CD8-positive, alpha-beta memory T cell (primary cell): ENCODE measurements at regions of chr16 and their contacts with region 1.

Region 1: GRCh38 chr16:56964243-56965148 is 2.7 kb downstream of the CETP start:
- DNase-seq: peak; percentile 87 to 96 (median 95)
- H3K4me3 ChIP-seq: no peak overlapping the region
- H3K4me3 Mint-ChIP-seq: peak overlapping the region in 1 of 7 donors; percentile 11
- H3K27ac ChIP-seq: no peak overlapping the region
- H3K27ac Mint-ChIP-seq: peak overlapping the region in 4 of 8 donors; percentile 31 to 87 (median 82)
- H3K4me1 ChIP-seq: peaks cover 21% of the 10 kb centered on the region
- H3K4me1 Mint-ChIP-seq: peaks cover 18 to 31% (median 21%) of the 10 kb centered on the region in 3 donors
- H3K27me3 ChIP-seq: no peaks in the 10 kb centered on the region
- H3K27me3 Mint-ChIP-seq: peaks cover 0 to 1% of the 10 kb centered on the region in 2 donors

Region 2: DNA sequence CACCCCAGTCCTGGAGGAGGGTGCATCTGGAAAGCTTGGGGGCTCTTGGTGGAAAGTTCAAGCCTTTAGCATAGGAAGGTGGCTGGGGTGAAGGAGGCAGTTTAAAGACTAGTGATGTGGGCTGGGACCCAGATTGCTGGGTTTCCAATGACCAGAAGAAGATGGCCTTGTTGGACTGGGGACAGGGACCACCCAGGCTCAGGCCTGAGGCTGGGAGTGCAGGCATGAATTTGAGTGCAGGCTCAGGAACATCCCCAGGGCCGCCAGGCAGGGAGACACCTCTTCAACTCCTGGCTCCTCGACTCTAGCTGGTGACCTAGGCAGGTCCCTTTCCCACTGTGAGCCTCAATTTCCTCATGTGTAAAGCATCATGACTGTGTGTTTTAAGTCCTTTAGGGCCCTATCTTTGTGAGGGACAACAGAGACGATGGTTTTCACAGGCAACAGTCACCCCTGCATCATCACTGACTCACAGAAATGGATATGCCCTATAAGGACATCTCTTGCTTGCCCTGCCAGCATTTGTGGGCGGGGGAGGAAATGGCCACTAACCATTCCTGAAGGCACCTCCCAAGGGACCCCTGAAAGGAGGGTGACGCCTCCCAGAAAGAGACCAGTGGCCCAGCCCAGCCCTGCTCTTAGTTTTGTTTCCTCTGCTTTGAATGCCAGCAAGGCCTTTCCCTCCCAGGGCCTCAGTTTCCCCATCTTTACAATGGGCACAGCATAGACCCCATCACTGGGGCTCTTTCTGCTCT is 36.0 kb after region 1 on chr16:
- CTCF ChIA-PET with region 1: interaction called, 17 read pairs
- POLR2A ChIA-PET with region 1: no interaction called
- DNase-seq: peak in 3 of 5 donors; percentile 39 to 74 (median 39)
- H3K4me3 ChIP-seq: peak overlapping the region; percentile 52
- H3K4me3 Mint-ChIP-seq: peak overlapping the region; percentile 74 to 87 (median 79)
- H3K27ac ChIP-seq: peak overlapping the region; percentile 71
- H3K27ac Mint-ChIP-seq: peak overlapping the region; percentile 90 to 99 (median 96)
- H3K4me1 ChIP-seq: peaks cover 94% of the 10 kb centered on the region
- H3K4me1 Mint-ChIP-seq: peaks cover 97 to 100% (median 99%) of the 10 kb centered on the region in 3 donors
- H3K27me3 ChIP-seq: no peaks in the 10 kb centered on the region
- H3K27me3 Mint-ChIP-seq: no peaks in the 10 kb centered on the region

Region 3: DNA sequence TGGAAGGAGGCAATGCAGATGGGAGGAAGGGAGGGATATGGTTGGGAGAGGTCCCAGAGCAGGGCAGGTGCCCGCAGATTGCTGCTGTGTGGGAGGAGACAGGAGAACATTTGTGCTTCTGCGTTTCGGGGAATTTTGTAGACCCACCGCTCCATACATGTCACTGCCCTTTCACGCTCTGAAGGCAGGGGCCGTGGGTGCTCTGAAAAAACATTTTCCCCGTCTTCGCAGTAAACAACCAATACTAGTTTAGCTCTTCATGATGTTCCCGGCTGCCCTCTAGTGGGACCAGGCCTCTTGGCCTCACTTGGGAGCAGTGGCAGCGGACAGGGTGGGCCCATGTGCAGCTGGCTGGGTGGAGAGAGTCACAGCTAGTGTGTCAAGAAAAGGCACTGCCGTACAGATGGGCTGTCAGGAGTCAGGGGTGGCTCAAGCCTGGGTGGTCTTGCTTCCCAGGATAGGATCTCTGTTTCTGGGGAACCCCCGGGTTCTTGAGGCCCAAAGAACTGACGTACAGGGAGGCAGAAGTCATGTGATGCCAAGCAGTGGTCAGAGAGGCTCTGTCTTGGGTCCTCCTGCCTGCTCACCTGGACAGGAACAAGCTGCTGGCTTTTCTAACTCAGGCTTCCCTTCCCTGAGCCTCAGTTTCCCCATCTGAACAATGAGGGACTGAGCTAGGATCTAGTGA is 81.3 kb after region 1 on chr16:
- CTCF ChIA-PET with region 1: interaction called, 91 read pairs
- POLR2A ChIA-PET with region 1: interaction called, 5 read pairs
- DNase-seq: peak in 3 of 5 donors; percentile 38 to 76 (median 48)
- H3K4me3 ChIP-seq: no peak overlapping the region
- H3K4me3 Mint-ChIP-seq: peak overlapping the region in 4 of 7 donors; percentile 15 to 54 (median 16)
- H3K27ac ChIP-seq: no peak overlapping the region
- H3K27ac Mint-ChIP-seq: peak overlapping the region; percentile 85 to 96 (median 90)
- H3K4me1 ChIP-seq: peaks cover 49% of the 10 kb centered on the region
- H3K4me1 Mint-ChIP-seq: peaks cover 41 to 67% (median 44%) of the 10 kb centered on the region in 3 donors
- H3K27me3 ChIP-seq: no peaks in the 10 kb centered on the region
- H3K27me3 Mint-ChIP-seq: peaks cover 0 to 1% of the 10 kb centered on the region in 2 donors

Region 4: DNA sequence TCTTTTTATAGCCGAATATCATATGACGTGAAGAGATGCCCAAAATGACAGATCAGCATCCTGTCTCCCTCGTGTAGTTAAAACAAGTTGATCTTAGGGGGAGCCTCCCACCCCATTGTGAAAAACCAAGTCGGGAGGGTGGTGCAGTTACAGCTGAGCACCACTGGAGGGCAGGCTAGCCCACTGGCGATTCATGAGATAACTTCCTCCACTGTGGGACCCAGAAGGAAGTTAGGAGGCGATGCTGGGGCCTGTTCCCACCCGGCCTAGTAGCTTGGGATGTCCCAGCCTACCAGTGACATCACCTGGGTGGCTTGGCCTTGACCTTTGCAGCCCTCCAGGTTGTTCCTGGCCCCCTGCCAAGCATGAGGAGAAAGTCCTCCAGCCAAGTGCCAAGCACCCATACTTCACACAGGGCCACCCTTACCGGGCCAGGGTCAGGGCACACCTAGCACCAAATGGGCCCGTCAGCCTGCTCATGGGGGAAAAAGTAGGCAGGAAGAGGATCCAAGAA is 119.8 kb after region 1 on chr16:
- CTCF ChIA-PET with region 1: interaction called, 17 read pairs
- POLR2A ChIA-PET with region 1: no interaction called
- DNase-seq: peak; percentile 63 to 85 (median 78)
- H3K4me3 ChIP-seq: no peak overlapping the region
- H3K4me3 Mint-ChIP-seq: peak overlapping the region in 2 of 7 donors; percentile 17 to 76
- H3K27ac ChIP-seq: peak overlapping the region; percentile 21
- H3K27ac Mint-ChIP-seq: peak overlapping the region; percentile 29 to 96 (median 85)
- H3K4me1 ChIP-seq: peaks cover 12% of the 10 kb centered on the region
- H3K4me1 Mint-ChIP-seq: peaks cover 12 to 16% (median 14%) of the 10 kb centered on the region in 3 donors
- H3K27me3 ChIP-seq: no peaks in the 10 kb centered on the region
- H3K27me3 Mint-ChIP-seq: no peaks in the 10 kb centered on the region

Region 5: GRCh38 chr16:57284208-57284951 is 319.9 kb after region 1 on chr16 and contains the start of gene PLLP:
- CTCF ChIA-PET with region 1: no interaction called
- POLR2A ChIA-PET with region 1: no interaction called
- DNase-seq: peak in 4 of 5 donors; percentile 13 to 59 (median 32)
- H3K4me3 ChIP-seq: peak within 1 kb of the TSS; percentile 53
- H3K4me3 Mint-ChIP-seq: peak within 1 kb of the TSS; percentile 58 to 89 (median 71)
- H3K27ac ChIP-seq: peak within 1 kb of the TSS; percentile 4
- H3K27ac Mint-ChIP-seq: peak within 1 kb of the TSS in 1 of 8 donors; percentile 21
- H3K4me1 ChIP-seq: peaks cover 16% of the 10 kb centered on the region
- H3K4me1 Mint-ChIP-seq: peaks cover 7 to 19% (median 17%) of the 10 kb centered on the region in 3 donors
- H3K27me3 ChIP-seq: peaks cover 10% of the 10 kb centered on the region
- H3K27me3 Mint-ChIP-seq: peaks cover 17 to 24% of the 10 kb centered on the region in 2 donors
- total RNA-seq, gene PLLP: 0.49 TPM in 1 of 2 experiments, not detected in the other